ENCODE measurements at regions of chr12 and their contacts with region 1.

Region 1: DNA sequence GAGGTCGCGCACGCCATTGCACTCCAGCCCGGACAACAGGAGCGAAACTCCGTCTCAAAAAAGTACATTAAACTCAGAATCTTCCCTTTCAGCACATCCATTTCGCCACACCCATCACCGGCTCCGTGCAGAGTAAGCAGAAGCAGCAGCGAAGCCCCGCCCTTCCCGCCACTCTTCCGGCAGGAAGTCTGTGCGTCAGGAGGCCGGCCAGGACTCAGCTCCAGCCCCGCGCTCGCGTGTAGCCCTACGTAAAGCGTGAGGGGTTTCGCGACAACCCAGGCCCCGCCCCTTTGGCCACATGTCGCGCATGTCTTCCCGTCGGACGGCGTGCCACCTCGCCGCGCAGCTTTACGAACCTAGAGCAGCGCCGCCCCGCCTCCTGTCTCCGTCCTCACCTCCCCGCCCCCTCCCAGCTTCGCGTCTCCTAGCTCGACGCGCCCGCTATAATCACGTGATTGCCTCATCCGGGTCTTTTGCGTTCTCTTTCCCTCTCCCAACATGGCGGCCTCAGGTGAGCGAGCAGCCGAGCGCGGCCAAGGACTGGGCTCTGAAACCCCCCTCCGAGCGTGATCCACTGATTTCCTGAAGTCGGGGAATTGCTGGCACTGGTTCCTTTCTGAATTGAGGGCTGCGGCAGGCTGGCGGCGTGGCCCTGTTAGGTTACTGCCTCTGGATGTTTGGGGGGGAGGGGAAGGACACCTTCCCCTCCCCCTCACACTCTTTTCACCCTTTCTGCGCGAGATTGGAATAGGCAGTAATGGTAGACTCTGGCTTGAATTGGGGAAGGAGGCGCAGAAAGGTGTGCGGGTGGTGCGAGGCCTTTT is at the start of gene EIF4B:
- DNase-seq: peak; percentile 99
- ATAC-seq: peak; percentile 93
- H3K4me3 ChIP-seq: peak within 1 kb of the TSS; percentile 88
- H3K27ac ChIP-seq: peak within 1 kb of the TSS; percentile 94
- H3K4me1 ChIP-seq: peaks cover 47% of the 10 kb centered on the region
- H3K27me3 ChIP-seq: no peaks in the 10 kb centered on the region
- CTCF ChIP-seq: no peak
- total RNA-seq, gene EIF4B: 424 and 434 TPM in 2 replicates

Region 2: DNA sequence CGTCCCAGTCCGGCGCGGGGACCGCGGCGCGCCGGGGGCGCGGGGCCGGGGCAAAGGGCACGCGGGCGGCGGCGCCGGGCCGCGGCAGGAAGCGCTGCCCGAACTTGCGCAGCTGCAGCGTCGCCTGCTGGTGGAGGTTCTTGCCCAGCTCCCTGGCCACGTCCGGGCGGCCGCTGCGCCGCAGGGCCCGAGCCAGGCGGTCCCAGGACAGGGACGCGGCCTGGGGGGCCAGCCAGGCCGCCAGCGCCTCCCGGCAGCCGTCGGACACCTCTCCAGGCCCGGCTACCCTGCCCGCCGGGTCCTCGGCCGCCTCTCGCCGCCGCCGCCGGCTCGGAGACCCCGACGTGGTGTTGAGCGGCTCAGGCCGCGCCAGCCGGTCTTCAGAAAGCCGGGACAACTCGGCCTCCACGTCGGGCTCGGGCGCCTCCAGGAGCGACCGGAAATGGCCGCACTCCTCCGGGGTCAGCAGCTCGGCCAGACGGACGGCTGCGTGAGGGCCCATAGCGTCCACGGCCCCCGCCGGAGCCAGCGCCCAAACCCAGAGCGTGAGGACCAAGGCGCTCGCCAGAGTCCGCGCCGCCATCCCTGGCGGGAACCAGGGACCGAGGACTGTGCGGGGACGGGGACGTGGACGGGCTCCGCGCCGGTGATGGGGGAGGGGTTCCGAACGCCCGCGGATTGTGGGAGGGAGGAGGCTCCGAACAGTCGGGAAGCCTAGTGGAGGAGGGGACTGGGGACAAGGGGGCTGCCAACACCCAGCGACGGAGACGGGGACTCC is 1191.7 kb before region 1 on chr12:
- CTCF ChIA-PET with region 1: interaction called, 11 read pairs
- POLR2A ChIA-PET with region 1: no interaction called
- intact Hi-C with region 1: no loop called
- DNase-seq: peak; percentile 78
- ATAC-seq: peak; percentile 92
- H3K4me3 ChIP-seq: peak overlapping the region; percentile 87
- H3K27ac ChIP-seq: 0 out of 2 replicates have a peak overlapping the region, but pooled peaks have one; percentile 20
- H3K4me1 ChIP-seq: peaks cover 16% of the 10 kb centered on the region; the same call in 1 of the 2 replicates
- H3K27me3 ChIP-seq: no peaks in the 10 kb centered on the region
- CTCF ChIP-seq: peak; percentile 43

Region 3: DNA sequence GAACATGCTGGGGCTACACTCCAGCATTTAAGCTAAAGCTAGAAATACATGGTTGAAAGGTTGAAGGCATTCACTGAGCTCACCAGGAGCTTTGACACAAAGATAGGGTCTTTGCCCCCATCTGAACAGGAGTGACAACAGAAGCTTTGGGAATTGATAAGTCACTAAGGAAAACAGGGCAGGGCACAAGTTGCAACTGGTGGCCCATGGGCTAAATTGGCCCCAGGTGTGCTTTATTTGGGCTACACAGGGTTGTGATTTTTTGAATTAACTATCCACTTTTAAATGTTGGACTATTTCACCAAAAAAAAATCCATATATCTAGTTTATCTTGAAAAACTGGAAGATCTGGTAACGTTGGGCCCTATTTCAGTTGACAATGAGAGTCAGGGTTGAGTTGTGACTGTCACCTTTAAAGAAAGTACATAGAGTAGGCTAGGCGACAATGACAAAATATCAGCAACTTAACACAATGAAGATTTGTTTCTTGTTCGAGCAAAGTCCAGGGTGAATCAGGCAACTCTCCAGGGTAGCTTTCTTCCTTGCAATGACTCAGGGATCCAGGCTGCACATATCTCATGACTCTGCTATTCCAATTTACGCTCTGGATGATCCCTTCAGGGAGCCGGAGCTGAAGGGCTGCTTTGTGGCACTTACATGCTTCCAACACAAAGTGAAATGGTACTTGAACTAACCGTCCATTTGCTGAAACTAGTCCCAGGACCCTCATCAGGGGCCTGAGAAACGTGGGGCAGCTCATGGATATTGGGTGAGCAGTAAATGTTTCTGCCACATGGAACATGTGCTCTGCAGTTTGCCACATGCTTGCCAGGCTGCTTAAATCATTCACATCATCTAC is 13.3 kb before region 1 on chr12:
- CTCF ChIA-PET with region 1: no interaction called
- POLR2A ChIA-PET with region 1: interaction called, 20 read pairs
- intact Hi-C with region 1: no loop called
- DNase-seq: peak; percentile 83
- ATAC-seq: peak; percentile 92
- H3K4me3 ChIP-seq: no peak overlapping the region
- H3K27ac ChIP-seq: peak overlapping the region; percentile 88
- H3K4me1 ChIP-seq: peaks cover 23% of the 10 kb centered on the region
- H3K27me3 ChIP-seq: no peaks in the 10 kb centered on the region
- CTCF ChIP-seq: no peak

Region 4: DNA sequence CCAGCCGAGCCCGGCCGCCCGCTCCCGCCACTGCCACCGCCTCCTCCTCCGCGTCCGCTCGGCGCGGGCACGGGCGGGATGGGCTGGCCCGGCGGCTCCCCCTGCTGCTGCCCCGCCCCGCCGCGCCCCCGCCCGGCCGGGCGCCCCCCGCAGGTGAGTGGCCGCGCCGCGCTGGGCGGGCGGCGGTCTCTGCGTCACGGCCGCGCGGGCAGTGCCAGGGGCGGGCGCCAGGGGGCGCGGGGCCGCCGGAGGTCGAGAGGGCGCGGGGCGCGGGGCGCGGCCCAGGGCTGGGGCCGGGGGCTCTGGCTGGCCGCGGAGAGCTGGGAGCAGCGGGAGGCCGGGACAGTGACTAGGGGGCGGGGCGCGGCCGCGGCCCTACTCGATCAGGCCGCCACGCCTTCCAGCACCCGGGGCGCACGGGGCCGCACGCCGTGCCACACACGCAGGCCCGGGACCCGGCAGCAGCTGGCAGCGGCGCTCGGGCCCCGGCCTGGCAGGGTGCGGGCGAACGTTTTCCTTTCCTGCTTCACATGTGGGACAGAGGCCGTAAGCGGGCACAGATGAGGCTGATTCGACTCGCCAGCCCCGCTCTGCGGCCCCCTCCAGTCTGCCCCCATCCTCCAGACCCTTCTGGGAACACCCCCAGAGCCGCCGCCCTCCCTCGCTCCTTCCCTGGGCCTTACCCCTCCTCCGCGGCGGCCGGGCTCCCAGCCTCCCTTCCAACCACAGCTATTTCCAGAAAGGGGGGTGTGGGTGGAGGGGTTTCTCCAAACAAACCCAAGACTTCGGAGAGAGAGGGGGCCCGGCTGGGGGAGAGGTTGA is 41.2 kb after region 1 on chr12:
- CTCF ChIA-PET with region 1: no interaction called
- POLR2A ChIA-PET with region 1: interaction called, 7 read pairs
- intact Hi-C with region 1: loop called (anchors 2 kb)
- DNase-seq: peak; percentile 73
- ATAC-seq: peak; percentile 38
- H3K4me3 ChIP-seq: peak overlapping the region; percentile 71
- H3K27ac ChIP-seq: peak overlapping the region; percentile 55
- H3K4me1 ChIP-seq: peaks cover 60% of the 10 kb centered on the region
- H3K27me3 ChIP-seq: no peaks in the 10 kb centered on the region
- CTCF ChIP-seq: no peak

Region 5: GRCh38 chr12:53159195-53159839 is 153.1 kb after region 1 on chr12:
- CTCF ChIA-PET with region 1: no interaction called
- POLR2A ChIA-PET with region 1: no interaction called
- intact Hi-C with region 1: no loop called
- DNase-seq: peak; percentile 86
- ATAC-seq: peak; percentile 96
- H3K4me3 ChIP-seq: no peak overlapping the region
- H3K27ac ChIP-seq: no peak overlapping the region
- H3K4me1 ChIP-seq: no peaks in the 10 kb centered on the region
- H3K27me3 ChIP-seq: no peaks in the 10 kb centered on the region
- CTCF ChIP-seq: peak; percentile 97